Endothelial cell of umbilical vein (primary cell): ENCODE measurements at regions of chr15 and their contacts with region 1.

Region 1: DNA sequence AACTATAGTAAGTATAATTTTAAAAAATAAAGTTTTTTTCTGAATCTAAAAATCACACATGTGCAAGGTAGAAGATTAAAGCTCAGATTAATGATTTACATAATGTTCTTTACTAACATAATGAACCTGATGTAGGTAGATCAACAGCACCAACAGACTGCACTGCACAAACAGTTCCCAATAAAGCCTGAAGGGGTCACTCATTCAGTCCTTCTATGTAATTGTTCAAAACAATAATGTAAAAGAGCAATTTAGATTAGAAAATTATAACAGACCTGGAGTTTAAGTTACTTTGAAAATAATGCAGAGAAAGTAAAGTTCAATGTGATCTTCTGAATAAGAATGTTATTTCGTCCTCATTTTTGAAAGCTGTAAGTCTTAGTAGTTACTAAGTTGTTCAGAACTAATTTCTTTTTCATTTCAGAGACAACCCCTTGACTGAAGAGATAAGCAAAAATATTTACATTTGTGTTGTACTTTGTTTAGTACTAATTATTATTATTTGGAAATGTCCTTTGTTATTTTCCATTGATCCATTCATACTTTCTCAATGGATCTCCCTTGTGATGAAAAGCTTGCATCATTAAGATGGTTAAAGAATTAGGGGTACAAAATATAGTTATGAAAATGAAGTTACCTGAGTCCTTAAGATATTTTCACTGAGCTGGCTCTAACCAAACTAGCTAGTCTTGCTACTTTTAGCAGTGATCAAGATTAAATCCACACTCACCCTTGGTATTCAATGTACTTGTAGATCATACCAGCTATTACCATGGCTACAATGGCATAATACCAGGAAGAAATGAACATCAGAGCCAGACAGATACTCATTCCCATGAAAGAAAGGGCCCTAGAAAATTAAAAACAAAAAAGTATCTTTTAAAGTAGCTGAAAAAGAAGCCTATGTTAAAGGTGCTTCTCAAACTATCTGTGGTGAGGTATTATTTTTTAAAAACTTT is 16.8 kb downstream of the EMC4 start:
- DNase-seq: peak; percentile 67
- H3K4me3 ChIP-seq: no peak overlapping the region
- H3K27ac ChIP-seq: no peak overlapping the region
- H3K4me1 ChIP-seq: peaks cover 21% of the 10 kb centered on the region
- H3K27me3 ChIP-seq: no peaks in the 10 kb centered on the region
- CTCF ChIP-seq: peak; percentile 47 to 51
- POLR2A ChIP-seq: no peak

Region 2: DNA sequence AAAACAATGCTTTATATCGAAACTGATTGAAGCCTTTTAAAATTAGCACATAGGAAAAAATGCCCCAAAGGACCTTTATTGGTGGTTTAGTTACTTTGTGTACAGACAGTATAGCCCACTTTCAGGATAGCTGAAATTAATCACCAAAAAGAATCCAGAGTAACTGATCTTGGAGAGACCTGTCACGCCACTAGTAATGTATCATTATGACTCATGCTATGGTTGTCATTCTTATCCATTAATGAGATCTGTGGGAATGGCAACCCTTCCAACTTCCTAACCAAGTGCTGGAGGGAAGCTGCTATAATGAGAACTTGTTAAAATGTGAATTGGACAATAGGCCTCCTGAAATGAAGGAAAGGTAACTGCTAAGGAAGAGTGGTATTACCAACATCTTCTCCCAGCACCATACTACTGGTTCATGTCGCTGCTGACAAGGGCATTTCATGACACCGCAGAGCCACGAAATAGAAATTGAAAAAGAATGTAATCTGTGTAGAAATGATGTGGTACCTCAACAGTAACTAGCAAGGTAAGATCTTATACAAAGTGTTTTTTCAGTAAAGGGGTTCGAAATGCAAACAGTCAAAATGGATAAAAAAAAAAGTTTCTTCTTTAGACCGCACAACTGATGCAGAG is 23.9 kb before region 1 on chr15:
- CTCF ChIA-PET with region 1: no interaction called
- POLR2A ChIA-PET with region 1: no interaction called
- dilution Hi-C with region 1: no loop called
- intact Hi-C with region 1: no loop called
- DNase-seq: no peak
- H3K4me3 ChIP-seq: no peak overlapping the region
- H3K27ac ChIP-seq: no peak overlapping the region
- H3K4me1 ChIP-seq: no peaks in the 10 kb centered on the region
- H3K27me3 ChIP-seq: no peaks in the 10 kb centered on the region
- CTCF ChIP-seq: no peak
- POLR2A ChIP-seq: no peak

Region 3: DNA sequence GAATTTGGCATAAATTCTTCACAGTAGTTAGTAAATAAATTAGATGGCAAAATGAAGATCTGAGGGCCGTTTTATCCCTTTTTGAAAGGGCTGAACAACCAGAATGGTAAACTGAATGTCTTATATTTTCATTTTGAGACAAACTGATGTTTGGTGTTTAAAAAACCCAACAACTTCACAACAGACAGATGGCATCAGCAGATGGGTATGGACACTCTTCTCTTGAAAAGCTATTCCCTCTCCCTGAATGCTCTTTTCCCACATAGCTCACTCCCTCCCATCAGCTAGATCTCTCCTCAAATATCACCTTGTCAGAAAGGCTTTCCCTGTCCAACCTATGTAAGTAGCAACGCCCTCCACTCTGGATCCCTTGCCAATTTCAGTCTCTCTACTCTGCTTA is 16.5 kb after region 1 on chr15:
- CTCF ChIA-PET with region 1: no interaction called
- POLR2A ChIA-PET with region 1: no interaction called
- dilution Hi-C with region 1: no loop called
- intact Hi-C with region 1: no loop called
- DNase-seq: no peak
- H3K4me3 ChIP-seq: no peak overlapping the region
- H3K27ac ChIP-seq: no peak overlapping the region
- H3K4me1 ChIP-seq: no peaks in the 10 kb centered on the region
- H3K27me3 ChIP-seq: no peaks in the 10 kb centered on the region
- CTCF ChIP-seq: no peak
- POLR2A ChIP-seq: no peak

Region 4: GRCh38 chr15:34337557-34338306 is 96.1 kb after region 1 on chr15 and contains the start of gene SLC12A6:
- CTCF ChIA-PET with region 1: interaction called, 8 read pairs
- POLR2A ChIA-PET with region 1: no interaction called
- dilution Hi-C with region 1: no loop called
- intact Hi-C with region 1: loop called (anchors 2 kb)
- DNase-seq: peak; percentile 92
- H3K4me3 ChIP-seq: peak within 1 kb of the TSS; percentile 54 to 83 (median 61)
- H3K27ac ChIP-seq: peak within 1 kb of the TSS; percentile 71
- H3K4me1 ChIP-seq: peaks cover 43% of the 10 kb centered on the region
- H3K27me3 ChIP-seq: no peaks in the 10 kb centered on the region
- CTCF ChIP-seq: no peak
- POLR2A ChIP-seq: peak; percentile 56
- total RNA-seq, gene SLC12A6: 27.1 and 29.4 TPM in 2 replicates

Region 5: GRCh38 chr15:34794590-34795206 is 553.0 kb after region 1 on chr15:
- CTCF ChIA-PET with region 1: no interaction called
- POLR2A ChIA-PET with region 1: no interaction called
- dilution Hi-C with region 1: no loop called
- intact Hi-C with region 1: no loop called
- DNase-seq: no peak
- H3K4me3 ChIP-seq: no peak overlapping the region
- H3K27ac ChIP-seq: no peak overlapping the region
- H3K4me1 ChIP-seq: peaks cover 3% of the 10 kb centered on the region
- H3K27me3 ChIP-seq: peaks cover 32 to 39% of the 10 kb centered on the region in 2 experiments
- CTCF ChIP-seq: no peak
- POLR2A ChIP-seq: no peak